Activated naive CD8-positive, alpha-beta T cell treated with anti-CD3 and anti-CD28 coated beads, Interleukin-2, amount 10 ng/mL, durations not matched to agents 7 days and 5 days (primary cell): ENCODE measurements at regions of chr10 and their contacts with region 1.

Region 1: GRCh38 chr10:14564268-14564744 is 210.4 kb downstream of the FAM107B start:
- DNase-seq: no peak
- ATAC-seq: peak; percentile 11
- H3K4me3 Mint-ChIP-seq: peak overlapping the region; percentile 75
- H3K27ac Mint-ChIP-seq: peak overlapping the region; percentile 93
- H3K4me1 Mint-ChIP-seq: peaks cover 80% of the 10 kb centered on the region
- H3K27me3 Mint-ChIP-seq: no peaks in the 10 kb centered on the region

Region 2: GRCh38 chr10:14439451-14440259 is 124.7 kb before region 1 on chr10:
- POLR2A ChIA-PET with region 1: no interaction called
- DNase-seq: no peak
- ATAC-seq: no peak
- H3K4me3 Mint-ChIP-seq: no peak overlapping the region
- H3K27ac Mint-ChIP-seq: no peak overlapping the region
- H3K4me1 Mint-ChIP-seq: no peaks in the 10 kb centered on the region
- H3K27me3 Mint-ChIP-seq: peaks cover 23% of the 10 kb centered on the region

Region 3: GRCh38 chr10:14553448-14553847 is 10.9 kb before region 1 on chr10:
- POLR2A ChIA-PET with region 1: interaction called, 28 read pairs
- DNase-seq: no peak
- ATAC-seq: peak; percentile 59
- H3K4me3 Mint-ChIP-seq: peak overlapping the region; percentile 49
- H3K27ac Mint-ChIP-seq: peak overlapping the region; percentile 63
- H3K4me1 Mint-ChIP-seq: peaks cover 72% of the 10 kb centered on the region
- H3K27me3 Mint-ChIP-seq: no peaks in the 10 kb centered on the region

Region 4: GRCh38 chr10:14583252-14583651 is 18.9 kb after region 1 on chr10:
- POLR2A ChIA-PET with region 1: interaction called, 33 read pairs
- DNase-seq: peak; percentile 73
- ATAC-seq: peak; percentile 71
- H3K4me3 Mint-ChIP-seq: peak overlapping the region; percentile 78
- H3K27ac Mint-ChIP-seq: peak overlapping the region; percentile 94
- H3K4me1 Mint-ChIP-seq: peaks cover 80% of the 10 kb centered on the region
- H3K27me3 Mint-ChIP-seq: no peaks in the 10 kb centered on the region